ENCODE measurements at regions of chr11 and their contacts with region 1.

Region 1: GRCh38 chr11:130916238-130916855 is at the start of gene SNX19:
- DNase-seq: peak; percentile 96
- H3K4me3 ChIP-seq: peak within 1 kb of the TSS; percentile 68 to 98 (median 92)
- H3K27ac ChIP-seq: peak within 1 kb of the TSS; percentile 85 to 95 (median 92)
- H3K4me1 ChIP-seq: peaks cover 29 to 44% (median 41%) of the 10 kb centered on the region in 4 donors
- H3K27me3 ChIP-seq: no peaks in the 10 kb centered on the region
- CTCF ChIP-seq: peak; percentile 91 to 99 (median 97)
- EP300 ChIP-seq: no peak
- POLR2A ChIP-seq: peak; percentile 91
- total RNA-seq, gene SNX19: 87.6 to 118 (median 95.8) TPM

Region 2: DNA sequence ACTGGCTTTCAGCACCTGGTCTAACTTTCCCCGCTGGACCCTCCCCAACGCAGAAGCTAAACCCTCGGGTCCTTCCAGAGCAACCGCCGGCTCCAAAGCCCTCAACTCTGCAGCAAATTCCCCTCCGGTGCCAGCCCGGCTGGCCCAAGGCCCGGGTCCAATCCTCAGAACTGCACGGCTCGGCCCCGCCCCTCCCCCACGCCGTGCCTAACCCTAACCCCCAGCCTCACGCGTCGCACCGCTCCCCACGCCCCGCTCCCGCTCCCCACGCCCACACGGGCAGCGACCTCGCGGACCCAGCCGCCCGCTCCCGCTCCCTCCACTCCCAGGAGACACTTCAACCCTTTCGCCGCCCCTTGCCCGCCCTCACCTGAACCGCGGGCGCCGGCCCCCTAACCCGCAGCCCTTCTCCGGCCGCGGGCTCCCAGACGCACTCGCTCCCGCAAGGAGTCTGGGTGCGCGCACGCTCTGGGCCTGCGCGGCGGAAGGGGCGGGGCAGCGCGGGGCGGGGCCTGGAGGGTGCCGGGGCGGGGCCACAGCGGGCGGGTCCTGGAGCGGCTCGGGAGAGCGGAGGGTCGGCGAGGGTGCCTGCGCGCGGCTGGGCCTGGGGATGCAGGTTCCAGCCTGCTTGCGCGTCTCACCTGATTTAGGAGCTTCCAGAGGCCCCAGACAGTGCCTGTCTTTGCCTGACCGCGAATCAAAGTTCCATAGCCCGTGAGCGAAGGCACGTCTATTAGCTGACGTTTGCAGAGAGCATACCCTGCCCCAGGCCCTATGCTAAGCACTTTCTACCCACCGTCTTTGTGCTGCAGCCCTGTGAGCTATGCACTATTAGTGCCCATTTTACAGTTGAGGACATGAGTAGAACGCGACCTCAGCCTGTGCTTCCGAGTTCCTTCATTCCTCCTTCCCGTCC is 1021.0 kb before region 1 on chr11 and contains the start of gene NFRKB:
- intact Hi-C with region 1: loop called (anchors 10 kb)
- DNase-seq: peak; percentile 93
- H3K4me3 ChIP-seq: peak within 1 kb of the TSS; percentile 78 to 93 (median 90)
- H3K27ac ChIP-seq: peak within 1 kb of the TSS; percentile 83 to 87 (median 84)
- H3K4me1 ChIP-seq: peaks cover 14 to 28% (median 19%) of the 10 kb centered on the region in 4 donors
- H3K27me3 ChIP-seq: no peaks in the 10 kb centered on the region
- CTCF ChIP-seq: no peak
- EP300 ChIP-seq: no peak
- POLR2A ChIP-seq: no peak
- total RNA-seq, gene NFRKB: 15.0 to 33.5 (median 27.5) TPM

Region 3: DNA sequence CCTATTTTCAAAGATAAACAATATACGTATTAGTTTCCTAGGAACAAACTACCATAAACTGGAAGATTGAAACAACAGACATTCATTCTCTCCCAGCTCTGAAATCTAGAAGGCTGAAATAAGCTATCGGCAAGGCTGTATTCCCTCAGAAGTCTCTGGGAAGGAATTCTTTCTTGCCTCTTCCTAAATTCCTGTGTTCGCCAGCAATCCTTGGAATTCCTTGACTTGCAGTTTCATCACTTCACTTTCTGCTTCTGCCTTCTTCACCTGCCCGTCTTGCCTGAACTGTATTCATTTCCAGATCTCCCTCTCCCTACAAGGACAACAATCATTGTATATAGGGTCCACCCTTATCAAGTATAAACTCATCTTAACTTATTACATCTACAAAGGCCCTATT is 896.0 kb before region 1 on chr11:
- intact Hi-C with region 1: no loop called
- DNase-seq: no peak
- H3K4me3 ChIP-seq: no peak overlapping the region
- H3K27ac ChIP-seq: no peak overlapping the region
- H3K4me1 ChIP-seq: no peaks in the 10 kb centered on the region
- H3K27me3 ChIP-seq: no peaks in the 10 kb centered on the region
- CTCF ChIP-seq: no peak
- EP300 ChIP-seq: no peak
- POLR2A ChIP-seq: no peak

Region 4: GRCh38 chr11:130817330-130817944 is 98.9 kb before region 1 on chr11:
- intact Hi-C with region 1: no loop called
- DNase-seq: peak; percentile 68
- H3K4me3 ChIP-seq: no peak overlapping the region
- H3K27ac ChIP-seq: no peak overlapping the region
- H3K4me1 ChIP-seq: no peaks in the 10 kb centered on the region
- H3K27me3 ChIP-seq: no peaks in the 10 kb centered on the region
- CTCF ChIP-seq: no peak
- EP300 ChIP-seq: no peak
- POLR2A ChIP-seq: no peak

Measured in esophagus muscularis mucosa (tissue), 4 donors.